Transverse colon (tissue), 4 donors: ENCODE measurements at regions of chr16 and their contacts with region 1.

Region 1: DNA sequence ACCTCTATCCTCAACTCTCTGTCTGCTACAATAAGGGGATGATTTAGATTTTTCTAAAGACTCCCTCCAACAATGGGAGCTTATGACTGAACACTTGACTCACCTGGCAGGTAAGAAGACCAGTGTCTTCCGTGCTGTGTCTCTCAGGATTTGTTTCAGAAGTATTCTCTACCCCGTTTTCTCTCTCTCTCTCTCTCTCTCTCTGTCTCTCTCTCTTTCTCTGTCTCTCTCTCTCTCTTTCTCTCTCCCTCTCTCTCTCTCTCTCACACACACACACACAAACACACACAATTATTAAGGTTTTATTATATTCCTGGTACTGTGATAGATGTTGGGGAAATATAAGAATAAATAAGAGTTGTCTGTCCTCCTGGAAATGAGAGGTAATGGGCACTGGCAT is 263.9 kb downstream of the TOX3 start:
- DNase-seq: no peak
- H3K4me3 ChIP-seq: no peak overlapping the region
- H3K27ac ChIP-seq: no peak overlapping the region
- H3K4me1 ChIP-seq: no peaks in the 10 kb centered on the region
- H3K27me3 ChIP-seq: no peaks in the 10 kb centered on the region
- CTCF ChIP-seq: no peak
- EP300 ChIP-seq: no peak
- POLR2A ChIP-seq: no peak

Region 2: GRCh38 chr16:54022362-54022761 is 1739.3 kb after region 1 on chr16:
- in situ Hi-C with region 1: no loop called
- intact Hi-C with region 1: loop called (anchors 5 kb)
- DNase-seq: no peak
- H3K4me3 ChIP-seq: no peak overlapping the region
- H3K27ac ChIP-seq: no peak overlapping the region
- H3K4me1 ChIP-seq: no peaks in the 10 kb centered on the region
- H3K27me3 ChIP-seq: no peaks in the 10 kb centered on the region
- CTCF ChIP-seq: no peak
- EP300 ChIP-seq: no peak
- POLR2A ChIP-seq: no peak